AG04450 (cell line): ENCODE measurements at regions of chr11 and their contacts with region 1.

Region 1: GRCh38 chr11:110199184-110199941 is 97.1 kb downstream of the RDX start:
- DNase-seq: no peak
- H3K4me3 ChIP-seq: no peak overlapping the region
- H3K27ac ChIP-seq: no peak overlapping the region
- H3K27me3 ChIP-seq: no peaks in the 10 kb centered on the region
- CTCF ChIP-seq: no peak

Region 2: GRCh38 chr11:109946322-109946846 is 253.0 kb before region 1 on chr11:
- CTCF ChIA-PET with region 1: interaction called, 31 read pairs
- POLR2A ChIA-PET with region 1: no interaction called
- DNase-seq: peak; percentile 90
- H3K4me3 ChIP-seq: peak overlapping the region; percentile 38
- H3K27ac ChIP-seq: peak overlapping the region; percentile 88
- H3K27me3 ChIP-seq: no peaks in the 10 kb centered on the region
- CTCF ChIP-seq: peak; percentile 99

Region 3: DNA sequence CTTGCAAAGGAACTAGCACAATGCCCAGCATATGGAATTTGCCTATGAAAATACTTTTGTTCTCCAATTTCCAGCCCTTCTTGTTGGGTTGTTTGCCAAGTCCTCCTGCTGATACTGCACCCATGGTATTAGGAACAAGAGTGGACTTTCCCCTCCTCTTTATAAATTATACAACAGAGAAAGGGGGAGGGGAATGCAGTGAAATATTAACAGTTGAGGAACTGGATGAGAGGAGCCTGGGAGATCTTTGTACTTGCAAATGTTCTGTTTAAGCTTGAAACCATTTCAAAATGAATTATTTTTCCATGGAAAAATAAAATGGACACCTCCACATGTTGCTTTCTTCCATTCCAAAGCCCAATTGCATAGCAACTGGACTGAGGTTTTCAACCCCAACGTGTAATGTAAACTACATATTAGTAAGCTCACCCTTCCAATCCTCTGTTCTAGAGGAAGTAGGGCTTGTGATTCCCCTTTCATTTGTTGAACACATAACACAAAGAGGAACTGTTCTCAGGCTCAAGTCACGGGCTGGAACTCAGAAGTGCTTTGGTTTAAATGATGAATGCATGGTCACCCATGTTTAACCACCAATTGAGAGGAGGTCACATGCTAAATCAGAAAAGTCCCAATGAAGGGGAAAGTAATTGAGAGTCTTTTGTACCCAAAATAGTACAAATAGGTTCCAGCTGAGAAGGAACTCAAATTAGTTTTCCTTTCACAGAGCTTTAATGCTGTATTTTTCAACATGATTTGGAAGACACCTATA is 172.3 kb before region 1 on chr11:
- CTCF ChIA-PET with region 1: no interaction called
- POLR2A ChIA-PET with region 1: no interaction called
- DNase-seq: no peak
- H3K4me3 ChIP-seq: no peak overlapping the region
- H3K27ac ChIP-seq: no peak overlapping the region
- H3K27me3 ChIP-seq: no peaks in the 10 kb centered on the region
- CTCF ChIP-seq: no peak

Region 4: DNA sequence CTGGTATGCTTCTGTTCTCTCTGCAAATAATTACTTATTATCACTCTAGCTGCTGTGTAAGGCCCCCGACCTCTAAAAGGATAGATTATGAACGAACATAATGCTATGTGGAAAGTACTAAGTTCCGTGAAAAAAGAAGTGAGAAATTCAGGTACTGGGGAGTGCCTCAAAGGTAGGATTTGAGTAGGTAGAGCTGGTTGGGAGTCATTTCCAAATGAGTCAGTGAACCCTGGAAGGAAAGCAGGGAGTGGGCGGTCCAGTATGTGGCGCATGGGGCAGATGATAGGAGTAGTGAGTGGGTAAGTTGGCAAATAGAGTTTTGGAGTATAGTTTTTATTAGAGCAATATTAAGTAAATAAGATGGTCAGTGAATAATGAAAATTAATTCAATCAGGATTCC is 103.8 kb before region 1 on chr11:
- CTCF ChIA-PET with region 1: no interaction called
- POLR2A ChIA-PET with region 1: no interaction called
- DNase-seq: no peak
- H3K4me3 ChIP-seq: no peak overlapping the region
- H3K27ac ChIP-seq: no peak overlapping the region
- H3K27me3 ChIP-seq: no peaks in the 10 kb centered on the region
- CTCF ChIP-seq: no peak

Region 5: DNA sequence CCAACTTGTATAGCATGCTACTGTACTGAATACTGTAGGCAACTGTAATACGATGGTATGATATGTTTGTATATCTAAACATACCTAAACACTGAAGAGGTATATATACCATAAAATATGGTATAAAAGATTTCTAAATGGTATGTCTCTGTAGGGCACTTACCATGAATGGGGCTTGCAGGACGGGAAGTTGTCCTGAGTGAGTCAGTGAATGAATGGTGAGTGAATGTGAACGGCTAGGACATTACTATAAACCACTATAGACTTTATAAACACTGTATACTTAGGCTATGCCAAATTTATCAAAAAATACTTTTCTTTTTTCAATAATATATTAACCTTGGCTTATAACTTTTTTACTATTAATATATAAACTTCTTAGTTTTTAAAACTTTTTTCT is 39.3 kb before region 1 on chr11:
- CTCF ChIA-PET with region 1: no interaction called
- POLR2A ChIA-PET with region 1: no interaction called
- DNase-seq: no peak
- H3K4me3 ChIP-seq: no peak overlapping the region
- H3K27ac ChIP-seq: no peak overlapping the region
- H3K27me3 ChIP-seq: no peaks in the 10 kb centered on the region
- CTCF ChIP-seq: no peak

Region 6: GRCh38 chr11:110185121-110185591 is 14.2 kb before region 1 on chr11:
- CTCF ChIA-PET with region 1: interaction called, 14 read pairs
- POLR2A ChIA-PET with region 1: no interaction called
- DNase-seq: no peak
- H3K4me3 ChIP-seq: no peak overlapping the region
- H3K27ac ChIP-seq: peak overlapping the region; percentile 21
- H3K27me3 ChIP-seq: no peaks in the 10 kb centered on the region
- CTCF ChIP-seq: no peak

Region 7: GRCh38 chr11:110366291-110366690 is 166.9 kb after region 1 on chr11:
- CTCF ChIA-PET with region 1: interaction called, 31 read pairs
- POLR2A ChIA-PET with region 1: no interaction called
- DNase-seq: no peak
- H3K4me3 ChIP-seq: no peak overlapping the region
- H3K27ac ChIP-seq: no peak overlapping the region
- H3K27me3 ChIP-seq: no peaks in the 10 kb centered on the region
- CTCF ChIP-seq: no peak

Region 8: DNA sequence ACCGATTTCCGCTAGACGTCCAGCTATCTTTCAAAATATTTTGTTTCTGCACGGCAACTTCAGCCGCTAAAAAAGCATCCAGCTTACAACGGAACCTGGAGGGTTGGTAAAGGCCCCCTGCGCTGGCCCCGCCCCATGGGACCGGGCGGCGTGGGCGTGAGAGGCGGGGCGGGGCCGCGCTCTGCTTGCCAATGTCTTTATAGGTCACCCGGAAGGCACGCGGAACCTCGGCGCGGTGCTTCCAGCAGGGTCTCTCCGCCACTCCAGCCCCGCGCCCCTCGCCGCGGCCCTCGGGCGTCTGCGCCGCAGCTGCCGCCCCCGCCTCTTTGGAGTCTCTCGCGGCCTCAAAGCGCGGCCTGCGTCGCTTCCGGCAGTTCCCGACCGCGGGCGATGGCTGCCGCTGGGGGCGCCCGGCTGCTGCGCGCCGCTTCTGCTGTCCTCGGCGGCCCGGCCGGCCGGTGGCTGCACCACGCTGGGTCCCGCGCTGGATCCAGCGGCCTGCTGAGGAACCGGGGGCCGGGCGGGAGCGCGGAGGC is 230.4 kb after region 1 on chr11 and contains the start of gene FDX1:
- CTCF ChIA-PET with region 1: interaction called, 144 read pairs
- POLR2A ChIA-PET with region 1: interaction called, 3 read pairs
- DNase-seq: peak; percentile 29
- H3K4me3 ChIP-seq: peak within 1 kb of the TSS; percentile 95
- H3K27ac ChIP-seq: peak within 1 kb of the TSS; percentile 69
- H3K27me3 ChIP-seq: no peaks in the 10 kb centered on the region
- CTCF ChIP-seq: peak; percentile 41
- polyA plus RNA-seq, gene FDX1: 6.7 and 8.9 TPM in 2 replicates